Activated T-helper 2 cell treated with anti-CD3 and anti-CD28 coated beads, Interferon-gamma antibody, Interleukin-2, Interleukin-4, amounts not matched to agents 10 μg/mL and 5 μg/mL and 100 μg/mL, durations not matched to agents 14 hours and 24 hours and 36 hours (primary cell): ENCODE measurements at regions of chr17 and their contacts with region 1.

Region 1: DNA sequence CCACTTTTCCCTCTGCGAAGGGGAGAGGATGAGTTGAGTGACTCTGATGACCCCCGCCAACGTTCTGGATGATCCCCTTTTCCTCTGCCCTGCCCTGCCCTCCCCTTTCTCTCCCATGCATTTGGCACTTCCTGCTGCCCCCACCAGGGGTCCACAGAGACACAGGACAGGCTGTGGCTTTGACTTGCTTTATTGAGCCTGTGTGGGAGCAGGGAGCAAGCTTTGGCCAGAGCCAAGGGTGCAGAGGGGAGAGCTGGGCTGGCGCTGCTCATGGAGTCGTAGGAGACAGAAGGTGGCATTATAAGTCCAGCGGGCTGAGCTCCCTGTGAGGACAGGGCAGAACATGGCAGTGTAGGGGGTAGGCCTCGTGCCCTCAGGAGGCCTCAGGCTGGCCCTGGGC is 1.6 kb downstream of the PPY start:
- DNase-seq: no peak
- H3K4me3 Mint-ChIP-seq: no peak overlapping the region
- H3K27ac Mint-ChIP-seq: no peak overlapping the region
- H3K4me1 Mint-ChIP-seq: peaks cover 2% of the 10 kb centered on the region
- H3K27me3 Mint-ChIP-seq: peaks cover 25% of the 10 kb centered on the region

Region 2: DNA sequence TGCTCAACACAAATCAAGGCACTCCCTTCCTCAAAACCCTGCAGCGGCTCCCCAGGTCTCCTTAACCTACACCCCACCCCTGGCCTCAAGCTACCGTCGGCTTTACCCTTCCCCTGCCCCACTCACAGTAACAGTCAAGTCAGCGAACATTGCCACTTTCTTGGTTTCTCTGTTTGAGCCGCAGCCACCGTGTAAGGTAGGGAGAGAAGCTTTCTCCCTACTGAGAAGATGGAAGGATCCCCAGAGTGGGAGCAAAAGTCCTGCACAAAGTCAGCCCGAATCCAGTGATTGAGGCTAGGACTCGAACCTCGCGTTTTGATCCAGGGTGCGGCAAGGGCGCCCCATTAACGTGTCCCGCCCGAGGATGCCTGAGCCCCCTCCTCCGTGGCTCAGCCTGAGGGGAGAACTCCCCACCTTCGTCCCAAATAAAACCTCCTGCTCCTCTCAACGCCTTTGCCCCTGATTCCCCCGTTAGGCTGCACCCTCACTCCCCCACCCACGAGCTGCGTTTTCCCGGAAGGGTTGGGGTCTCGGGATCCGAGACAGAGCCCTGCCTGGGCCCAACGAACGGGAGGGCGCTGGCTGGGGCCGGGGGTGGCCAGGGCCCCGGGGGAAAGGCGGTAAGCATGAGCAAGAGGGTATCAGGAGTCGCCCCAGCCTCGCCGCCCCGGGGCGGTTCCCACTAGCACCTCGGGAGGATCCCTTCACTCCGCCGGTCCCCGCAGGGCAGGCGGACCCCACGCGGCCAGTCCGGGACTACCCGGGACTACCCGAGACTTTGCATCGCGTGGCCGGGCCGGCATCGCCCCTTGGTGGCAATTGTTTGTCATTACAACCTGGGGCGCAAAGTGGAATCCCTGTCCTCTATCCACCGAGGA is 53.9 kb after region 1 on chr17:
- intact Hi-C with region 1: loop called (anchors 1 kb)
- DNase-seq: peak; percentile 54
- H3K4me3 Mint-ChIP-seq: no peak overlapping the region
- H3K27ac Mint-ChIP-seq: no peak overlapping the region
- H3K4me1 Mint-ChIP-seq: no peaks in the 10 kb centered on the region
- H3K27me3 Mint-ChIP-seq: peaks cover 18% of the 10 kb centered on the region

Region 3: DNA sequence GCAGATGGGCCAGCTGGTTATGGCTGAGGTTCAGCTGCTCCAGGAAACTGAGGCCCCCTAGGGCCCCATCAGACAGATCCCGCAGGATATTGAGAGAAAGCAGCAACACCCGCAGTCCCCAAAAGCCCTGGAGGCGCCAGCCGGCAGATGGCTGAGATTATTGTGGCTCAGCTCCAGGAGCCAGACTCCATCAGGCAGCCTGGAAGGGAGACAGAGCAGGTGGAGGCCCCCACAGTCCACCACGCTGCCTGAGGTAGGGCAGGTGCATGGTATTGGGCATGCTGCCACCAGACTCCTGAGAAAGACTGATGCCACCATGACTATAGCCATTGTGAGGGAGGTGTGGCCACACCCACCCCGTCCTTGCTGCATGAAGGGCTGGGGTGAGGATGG is 83.6 kb after region 1 on chr17:
- intact Hi-C with region 1: no loop called
- DNase-seq: no peak
- H3K4me3 Mint-ChIP-seq: no peak overlapping the region
- H3K27ac Mint-ChIP-seq: no peak overlapping the region
- H3K4me1 Mint-ChIP-seq: peaks cover 4% of the 10 kb centered on the region
- H3K27me3 Mint-ChIP-seq: no peaks in the 10 kb centered on the region

Region 4: GRCh38 chr17:44039829-44040635 is 99.4 kb after region 1 on chr17:
- intact Hi-C with region 1: loop called (anchors 2 kb)
- DNase-seq: no peak
- H3K4me3 Mint-ChIP-seq: peak overlapping the region; percentile 13
- H3K27ac Mint-ChIP-seq: peak overlapping the region; percentile 52
- H3K4me1 Mint-ChIP-seq: peaks cover 13% of the 10 kb centered on the region
- H3K27me3 Mint-ChIP-seq: no peaks in the 10 kb centered on the region